ENCODE measurements at regions of chr6 and their contacts with region 1.

Region 1: DNA sequence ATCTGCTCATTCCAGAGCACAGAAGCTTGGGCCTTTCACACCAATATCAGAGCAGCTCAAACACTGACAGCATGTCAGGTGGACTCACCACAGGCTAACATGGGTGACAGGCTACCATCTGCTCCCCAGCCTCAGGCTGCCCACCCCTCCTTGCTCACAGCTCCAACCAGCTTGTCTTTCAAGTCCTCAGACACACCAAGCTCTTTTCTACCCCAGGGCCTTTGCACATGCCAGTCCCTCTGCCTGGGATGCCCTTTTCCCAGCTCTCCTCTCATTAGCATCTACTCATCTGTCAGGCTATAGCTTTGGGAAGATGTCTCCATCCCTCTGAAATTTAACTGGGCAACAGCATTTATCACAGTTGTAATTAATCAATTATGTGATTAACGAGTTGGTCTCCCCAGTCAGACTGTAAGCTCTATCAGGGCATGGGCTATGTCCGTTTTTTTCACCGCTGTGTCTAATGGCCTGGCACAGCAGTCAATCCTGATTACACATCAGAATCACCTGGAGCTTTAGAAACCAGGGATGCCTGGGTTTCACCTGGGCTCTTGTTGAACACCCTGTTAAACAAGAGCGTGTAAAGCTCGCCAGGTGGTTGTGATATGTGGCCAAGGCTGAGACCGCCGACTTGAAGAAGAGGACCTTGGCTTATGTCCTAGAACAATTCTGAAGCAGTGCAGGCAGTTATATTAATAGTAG is 88.9 kb upstream of the MRPS10 start:
- DNase-seq: no peak
- ATAC-seq: no peak
- H3K4me3 ChIP-seq: no peak overlapping the region
- H3K27ac ChIP-seq: no peak overlapping the region
- H3K4me1 ChIP-seq: no peaks in the 10 kb centered on the region
- H3K27me3 ChIP-seq: peaks cover 3 to 21% of the 10 kb centered on the region in 2 experiments; a peak in 2 of 5 replicates
- CTCF ChIP-seq: no peak
- EP300 ChIP-seq: no peak
- POLR2A ChIP-seq: no peak
- RAD21 ChIP-seq: no peak

Region 2: GRCh38 chr6:42294759-42295158 is 11.8 kb before region 1 on chr6:
- CTCF ChIA-PET with region 1: no interaction called
- POLR2A ChIA-PET with region 1: no interaction called
- in situ Hi-C with region 1: no loop called
- intact Hi-C with region 1: no loop called
- DNase-seq: peak; percentile 34
- ATAC-seq: no peak
- H3K4me3 ChIP-seq: no peak overlapping the region
- H3K27ac ChIP-seq: no peak overlapping the region
- H3K4me1 ChIP-seq: no peaks in the 10 kb centered on the region
- H3K27me3 ChIP-seq: peaks cover 2 to 32% of the 10 kb centered on the region in 2 experiments; a peak in 3 of 5 replicates
- CTCF ChIP-seq: no peak
- EP300 ChIP-seq: no peak
- POLR2A ChIP-seq: no peak
- RAD21 ChIP-seq: no peak

Region 3: GRCh38 chr6:42378125-42378524 is 71.5 kb after region 1 on chr6:
- CTCF ChIA-PET with region 1: no interaction called
- POLR2A ChIA-PET with region 1: no interaction called
- in situ Hi-C with region 1: no loop called
- intact Hi-C with region 1: no loop called
- DNase-seq: no peak
- ATAC-seq: no peak
- H3K4me3 ChIP-seq: no peak overlapping the region
- H3K27ac ChIP-seq: no peak overlapping the region
- H3K4me1 ChIP-seq: no peaks in the 10 kb centered on the region
- H3K27me3 ChIP-seq: peaks cover 2 to 28% of the 10 kb centered on the region in 2 experiments; a peak in 4 of 5 replicates
- CTCF ChIP-seq: no peak
- EP300 ChIP-seq: no peak
- POLR2A ChIP-seq: no peak
- RAD21 ChIP-seq: no peak

Region 4: GRCh38 chr6:42532038-42532669 is 225.6 kb after region 1 on chr6:
- CTCF ChIA-PET with region 1: interaction called, 4 read pairs
- POLR2A ChIA-PET with region 1: no interaction called
- in situ Hi-C with region 1: no loop called
- intact Hi-C with region 1: loop called (anchors 5 kb)
- DNase-seq: peak; percentile 64
- ATAC-seq: peak; percentile 84
- H3K4me3 ChIP-seq: no peak overlapping the region
- H3K27ac ChIP-seq: no peak overlapping the region
- H3K4me1 ChIP-seq: no peaks in the 10 kb centered on the region
- H3K27me3 ChIP-seq: 0 out of 5 replicates have a peak, but pooled peaks cover 0 to 2% of the 10 kb centered on the region in 2 experiments
- CTCF ChIP-seq: peak; percentile 74
- EP300 ChIP-seq: no peak
- POLR2A ChIP-seq: no peak
- RAD21 ChIP-seq: peak; percentile 34; the same call in 1 of the 2 replicates

Region 5: GRCh38 chr6:42790549-42791181 is 484.1 kb after region 1 on chr6:
- CTCF ChIA-PET with region 1: no interaction called
- POLR2A ChIA-PET with region 1: no interaction called
- in situ Hi-C with region 1: no loop called
- intact Hi-C with region 1: no loop called
- DNase-seq: no peak
- ATAC-seq: peak; percentile 62
- H3K4me3 ChIP-seq: no peak overlapping the region
- H3K27ac ChIP-seq: no peak overlapping the region
- H3K4me1 ChIP-seq: peaks cover 59% of the 10 kb centered on the region
- H3K27me3 ChIP-seq: no peaks in the 10 kb centered on the region
- CTCF ChIP-seq: no peak
- EP300 ChIP-seq: no peak
- POLR2A ChIP-seq: 0 out of 4 replicates have a peak, but pooled peaks of 1 of the 2 experiments have one; percentile 34
- RAD21 ChIP-seq: no peak

Measured in HepG2 (cell line).